ENCODE measurements at regions of chr5 and their contacts with region 1.

Region 1: GRCh38 chr5:38420691-38421390 is 135.6 kb downstream of the LIFR start:
- DNase-seq: peak; percentile 65
- H3K4me3 Mint-ChIP-seq: no peak overlapping the region
- H3K27ac Mint-ChIP-seq: no peak overlapping the region
- H3K4me1 Mint-ChIP-seq: no peaks in the 10 kb centered on the region
- H3K27me3 Mint-ChIP-seq: peaks cover 46% of the 10 kb centered on the region

Region 2: GRCh38 chr5:38323645-38324295 is 97.1 kb before region 1 on chr5:
- CTCF ChIA-PET with region 1: no interaction called
- DNase-seq: no peak
- H3K4me3 Mint-ChIP-seq: no peak overlapping the region
- H3K27ac Mint-ChIP-seq: no peak overlapping the region
- H3K4me1 Mint-ChIP-seq: no peaks in the 10 kb centered on the region
- H3K27me3 Mint-ChIP-seq: peaks cover 3% of the 10 kb centered on the region

Region 3: DNA sequence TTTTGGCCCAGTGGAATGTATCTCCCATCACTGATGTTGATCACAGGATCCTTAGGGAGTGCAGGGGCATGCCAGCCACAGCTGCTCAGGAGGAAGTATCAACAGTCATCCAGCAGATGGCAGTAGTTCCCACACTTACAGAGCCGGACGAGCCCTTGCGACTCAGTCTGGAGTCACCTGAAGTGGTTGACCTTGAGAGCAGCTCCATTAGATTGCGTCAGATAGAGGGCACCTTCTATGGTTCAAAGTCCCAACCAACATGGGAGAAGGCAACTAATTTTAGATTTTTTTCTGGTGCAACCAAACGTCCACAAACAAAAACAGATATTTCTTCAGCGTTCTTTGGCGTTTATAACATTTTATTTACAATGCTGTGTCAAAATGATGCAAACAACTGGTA is 37.9 kb before region 1 on chr5:
- CTCF ChIA-PET with region 1: interaction called, 10 read pairs
- DNase-seq: peak; percentile 67
- H3K4me3 Mint-ChIP-seq: no peak overlapping the region
- H3K27ac Mint-ChIP-seq: no peak overlapping the region
- H3K4me1 Mint-ChIP-seq: peaks cover 19% of the 10 kb centered on the region
- H3K27me3 Mint-ChIP-seq: peaks cover 35% of the 10 kb centered on the region

Region 4: GRCh38 chr5:38809388-38810359 is 388.8 kb after region 1 on chr5:
- CTCF ChIA-PET with region 1: interaction called, 75 read pairs
- DNase-seq: peak; percentile 73
- H3K4me3 Mint-ChIP-seq: no peak overlapping the region
- H3K27ac Mint-ChIP-seq: no peak overlapping the region
- H3K4me1 Mint-ChIP-seq: peaks cover 2% of the 10 kb centered on the region
- H3K27me3 Mint-ChIP-seq: peaks cover 22% of the 10 kb centered on the region